ENCODE measurements at regions of chr17 and their contacts with region 1.

Region 1: DNA sequence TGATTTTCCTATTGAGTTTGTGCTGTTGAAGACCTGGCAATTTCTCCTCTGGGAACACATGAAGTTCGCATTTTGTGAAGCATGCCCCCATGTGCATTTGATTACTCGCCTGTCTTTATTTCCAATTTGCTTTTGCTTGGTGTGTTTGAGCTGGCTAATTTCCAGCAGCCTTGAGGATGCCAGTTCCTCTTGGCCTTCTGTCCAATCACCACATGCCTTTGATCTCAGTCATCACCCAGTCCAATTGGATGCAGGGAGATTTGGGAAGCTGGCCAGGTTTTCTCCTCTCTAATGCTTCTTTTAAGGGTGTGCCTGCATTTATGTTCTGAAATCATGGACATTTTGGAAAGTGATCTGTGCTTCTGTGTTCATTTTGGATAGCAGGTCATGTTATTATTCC is 3.8 kb upstream of the TMEM100 start:
- DNase-seq: peak; percentile 52 to 54
- H3K4me3 ChIP-seq: no peak overlapping the region
- H3K27ac ChIP-seq: peak overlapping the region in 1 of 3 donors; percentile 45
- H3K4me1 ChIP-seq: peaks cover 5 to 39% of the 10 kb centered on the region in 2 donors
- H3K27me3 ChIP-seq: no peaks in the 10 kb centered on the region
- CTCF ChIP-seq: no peak
- POLR2A ChIP-seq: no peak

Region 2: DNA sequence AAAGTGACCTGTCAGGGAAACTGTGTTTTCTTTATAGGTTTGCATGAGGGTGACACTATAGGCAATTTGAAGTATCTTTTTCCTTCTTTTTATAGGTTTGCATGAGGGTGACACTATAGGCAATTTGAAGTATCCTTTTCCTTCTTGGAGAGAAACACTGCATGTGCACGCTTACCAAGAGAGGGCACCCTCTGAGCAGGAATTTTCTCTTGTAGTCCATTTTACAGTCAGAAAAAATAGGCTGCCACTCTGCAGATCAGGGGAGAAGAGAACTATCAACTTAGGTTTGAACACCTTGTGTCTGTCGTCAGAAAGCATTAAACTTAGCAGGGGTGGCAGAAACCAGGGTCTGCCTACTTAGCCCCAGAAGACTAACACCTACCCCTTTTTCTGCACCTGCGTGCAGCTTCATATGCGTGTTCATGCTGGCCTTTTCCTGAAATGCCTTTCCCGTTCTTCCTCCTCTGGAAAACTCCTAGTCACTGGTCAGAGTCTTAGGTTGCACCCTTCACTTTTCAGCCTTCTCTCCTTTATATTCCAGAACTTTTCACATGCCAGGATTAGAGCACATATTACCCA is 198.8 kb before region 1 on chr17:
- intact Hi-C with region 1: no loop called
- DNase-seq: peak; percentile 17 to 21
- H3K4me3 ChIP-seq: no peak overlapping the region
- H3K27ac ChIP-seq: no peak overlapping the region
- H3K4me1 ChIP-seq: no peaks in the 10 kb centered on the region
- H3K27me3 ChIP-seq: no peaks in the 10 kb centered on the region
- CTCF ChIP-seq: peak in 4 of 6 experiments; percentile 24 to 49 (median 41)
- POLR2A ChIP-seq: no peak

Region 3: DNA sequence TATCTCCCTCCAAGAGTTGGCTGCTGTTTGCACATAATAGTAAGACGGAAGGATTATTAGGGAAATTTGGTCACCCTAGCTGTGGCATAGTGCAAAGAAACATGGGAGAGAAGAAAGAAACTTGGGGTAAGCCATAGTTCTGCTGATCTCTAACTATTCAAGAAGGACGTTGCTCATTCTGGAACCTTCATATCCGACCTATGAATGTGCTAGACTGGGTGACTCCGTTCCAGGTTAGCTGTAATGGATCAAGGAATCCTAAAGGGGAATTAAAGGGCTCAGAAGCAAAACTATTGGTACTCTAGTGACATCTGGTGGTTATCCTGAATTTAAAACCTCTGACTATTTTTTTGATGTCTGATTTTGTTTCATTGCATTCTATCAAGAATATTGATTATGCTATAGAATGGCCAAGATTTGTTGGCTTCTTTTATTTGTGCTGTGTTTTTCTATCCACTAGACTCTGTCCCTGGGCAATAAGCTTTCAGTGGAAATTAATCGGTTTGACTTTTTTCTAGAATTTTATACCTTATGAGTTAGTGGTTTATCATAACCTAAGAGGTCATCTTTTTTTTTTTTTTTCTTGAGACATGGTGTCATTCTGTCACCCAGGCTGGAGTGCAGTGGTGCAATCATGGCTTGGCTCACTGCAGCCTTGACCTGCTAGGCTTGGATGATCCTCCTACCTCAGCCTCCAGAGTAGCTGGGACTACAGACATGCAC is 43.9 kb after region 1 on chr17:
- intact Hi-C with region 1: loop called (anchors 10 kb)
- DNase-seq: no peak
- H3K4me3 ChIP-seq: no peak overlapping the region
- H3K27ac ChIP-seq: no peak overlapping the region
- H3K4me1 ChIP-seq: peaks cover 4 to 29% of the 10 kb centered on the region in 2 donors
- H3K27me3 ChIP-seq: no peaks in the 10 kb centered on the region
- CTCF ChIP-seq: peak; percentile 43 to 86 (median 62)
- POLR2A ChIP-seq: no peak

Measured in thyroid gland (tissue), 4 donors.